ENCODE measurements at regions of chr1 and their contacts with region 1.

Region 1: GRCh38 chr1:112358798-112359408 is 37.1 kb upstream of the CTTNBP2NL start:
- DNase-seq: peak; percentile 62 to 81 (median 75)
- ATAC-seq: peak; percentile 58 to 89 (median 88)
- H3K4me3 ChIP-seq: peak overlapping the region in 6 of 12 donors; percentile 8 to 51 (median 46)
- H3K27ac ChIP-seq: peak overlapping the region in 11 of 12 donors; percentile 61 to 89 (median 79)
- H3K4me1 ChIP-seq: peaks cover 0 to 36% (median 15%) of the 10 kb centered on the region in 12 donors
- H3K27me3 ChIP-seq: no peaks in the 10 kb centered on the region
- CTCF ChIP-seq: peak; percentile 68 to 83 (median 76)
- POLR2A ChIP-seq: no peak

Region 2: DNA sequence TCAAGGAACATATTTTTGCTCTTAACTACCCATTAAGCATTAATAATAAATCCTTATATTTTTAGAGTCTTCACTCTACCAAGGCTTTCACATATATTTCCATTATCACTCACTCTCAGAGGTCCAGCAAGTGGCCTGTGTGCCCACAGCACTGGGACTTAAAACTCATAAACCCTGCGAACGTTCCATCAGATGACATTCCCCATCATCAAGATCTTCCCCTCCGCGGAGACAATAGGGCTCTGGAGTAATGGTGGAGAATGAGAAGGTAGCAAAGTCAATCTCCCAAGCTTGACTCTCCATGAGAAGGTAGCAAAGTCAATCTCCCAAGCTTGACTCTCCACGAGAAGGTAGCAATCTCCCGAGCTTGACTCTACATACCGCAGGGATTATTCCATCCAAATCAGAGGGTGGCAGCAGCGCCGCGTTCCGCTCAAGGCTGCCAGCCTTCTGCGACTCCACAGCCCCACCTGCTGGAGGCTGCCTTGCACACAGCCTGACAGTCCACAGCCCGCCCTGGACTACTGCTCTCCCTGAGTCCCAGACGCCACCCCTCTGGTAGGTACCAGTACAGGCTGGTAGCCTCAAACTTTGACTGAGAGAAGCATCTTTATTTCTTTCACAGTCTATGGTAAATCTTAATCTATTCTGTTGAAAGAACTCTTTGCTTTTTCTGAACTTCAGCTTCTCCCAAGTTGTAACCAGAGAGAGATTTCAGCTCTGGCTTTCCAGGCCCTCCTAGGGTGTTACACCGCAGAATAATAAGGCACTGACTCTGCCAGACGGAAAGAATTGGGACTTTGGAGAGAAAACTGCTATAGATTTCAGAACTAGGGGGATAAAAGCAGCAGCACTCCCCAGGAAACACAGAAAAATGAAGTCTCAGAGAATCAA is 10.7 kb after region 1 on chr1:
- intact Hi-C with region 1: loop called in 1 of 10 experiments (anchors 1 kb)
- DNase-seq: peak; percentile 81 to 93 (median 86)
- ATAC-seq: peak; percentile 90 to 99 (median 98)
- H3K4me3 ChIP-seq: no peak overlapping the region
- H3K27ac ChIP-seq: no peak overlapping the region
- H3K4me1 ChIP-seq: peaks cover 0 to 5% (median 0%) of the 10 kb centered on the region in 12 donors
- H3K27me3 ChIP-seq: peaks cover 0 to 8% (median 0%) of the 10 kb centered on the region in 9 donors
- CTCF ChIP-seq: peak; percentile 93 to 99 (median 97)
- POLR2A ChIP-seq: no peak

Measured in heart left ventricle (tissue), 16 donors.